ENCODE measurements at regions of chr5 and their contacts with region 1.

Region 1: DNA sequence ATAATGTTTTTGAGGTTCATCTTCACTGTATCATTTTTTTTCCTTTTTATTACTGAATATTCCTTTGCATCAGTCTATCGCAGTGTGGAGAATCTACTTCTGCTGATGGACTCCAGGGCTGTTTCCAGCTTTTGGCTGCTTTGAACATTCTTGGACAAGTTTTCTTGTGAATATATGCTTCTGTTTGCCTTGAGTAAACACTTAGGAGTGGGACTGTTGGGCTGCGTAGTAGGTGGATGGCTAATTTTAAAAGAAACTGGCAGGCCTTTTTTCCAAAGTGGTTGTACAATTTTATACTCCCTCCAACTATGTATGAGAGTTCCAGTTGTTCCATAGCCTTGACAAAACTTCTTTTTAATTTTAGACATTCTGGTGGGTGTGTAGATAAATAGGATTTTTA is 102.4 kb downstream of the WDR41 start:
- DNase-seq: no peak
- ATAC-seq: no peak
- H3K4me3 ChIP-seq: no peak overlapping the region
- H3K4me3 Mint-ChIP-seq: no peak overlapping the region
- H3K27ac ChIP-seq: no peak overlapping the region
- H3K27ac Mint-ChIP-seq: no peak overlapping the region
- H3K4me1 ChIP-seq: no peaks in the 10 kb centered on the region
- H3K4me1 Mint-ChIP-seq: no peaks in the 10 kb centered on the region
- H3K27me3 ChIP-seq: peaks cover 0 to 3% of the 10 kb centered on the region in 2 experiments
- H3K27me3 Mint-ChIP-seq: no peaks in the 10 kb centered on the region
- CTCF ChIP-seq: no peak

Region 2: DNA sequence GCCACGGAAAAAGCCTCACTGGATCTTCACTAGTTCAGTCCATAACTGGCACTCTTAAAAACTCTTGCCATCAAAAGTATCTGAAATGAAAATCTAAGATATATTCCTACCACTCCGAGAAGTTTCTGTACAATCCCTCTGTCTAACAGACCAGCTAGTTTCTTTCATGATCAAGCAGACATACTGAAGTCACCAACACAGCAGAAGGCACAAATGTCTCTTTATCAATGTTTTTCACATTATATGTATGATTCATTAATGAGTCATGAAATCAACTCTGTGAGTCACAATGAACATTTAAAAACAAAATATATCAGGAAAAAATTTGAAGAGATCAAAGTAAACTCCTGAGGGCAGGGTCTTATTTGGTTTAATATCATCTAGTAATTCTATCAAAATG is 623.0 kb before region 1 on chr5:
- CTCF ChIA-PET with region 1: no interaction called
- POLR2A ChIA-PET with region 1: no interaction called
- intact Hi-C with region 1: no loop called
- DNase-seq: no peak
- ATAC-seq: no peak
- H3K4me3 ChIP-seq: no peak overlapping the region
- H3K4me3 Mint-ChIP-seq: no peak overlapping the region
- H3K27ac ChIP-seq: no peak overlapping the region
- H3K27ac Mint-ChIP-seq: no peak overlapping the region
- H3K4me1 ChIP-seq: no peaks in the 10 kb centered on the region
- H3K4me1 Mint-ChIP-seq: no peaks in the 10 kb centered on the region
- H3K27me3 ChIP-seq: no peaks in the 10 kb centered on the region
- H3K27me3 Mint-ChIP-seq: no peaks in the 10 kb centered on the region
- CTCF ChIP-seq: no peak

Region 3: DNA sequence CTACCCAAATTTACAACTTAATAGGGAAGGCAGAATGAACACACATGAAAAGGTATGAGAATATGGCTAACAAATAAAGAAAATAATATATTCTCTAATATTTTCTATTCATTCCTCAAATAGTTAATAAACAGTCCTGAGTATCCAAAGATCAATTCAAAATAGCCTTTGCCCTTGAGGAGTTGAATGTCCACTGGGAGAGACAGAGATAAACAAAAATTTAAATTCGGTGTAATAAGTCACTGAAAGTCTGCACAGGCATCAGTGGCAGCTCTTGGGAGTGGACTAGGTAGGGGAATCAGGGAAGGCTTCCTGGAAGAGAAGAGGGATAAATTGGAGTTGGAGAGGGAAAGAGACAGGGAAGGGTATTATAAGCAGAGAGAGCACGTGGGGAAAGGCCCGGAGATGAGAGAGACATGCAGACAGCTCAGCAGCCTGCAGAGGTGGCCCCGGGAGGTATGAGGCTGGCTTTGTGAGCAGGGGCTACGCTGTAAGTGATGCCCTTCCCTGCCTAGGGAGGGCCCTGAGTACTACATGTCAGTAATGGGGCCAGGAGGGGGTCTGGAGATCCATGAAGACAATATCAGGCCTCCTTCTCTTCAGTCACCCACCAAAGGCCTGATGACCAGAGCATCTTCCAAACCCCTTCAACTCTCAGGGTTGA is 42.2 kb before region 1 on chr5:
- CTCF ChIA-PET with region 1: no interaction called
- POLR2A ChIA-PET with region 1: no interaction called
- intact Hi-C with region 1: loop called in 1 of 2 experiments (anchors 5 kb)
- DNase-seq: no peak
- ATAC-seq: no peak
- H3K4me3 ChIP-seq: no peak overlapping the region
- H3K4me3 Mint-ChIP-seq: no peak overlapping the region
- H3K27ac ChIP-seq: no peak overlapping the region
- H3K27ac Mint-ChIP-seq: no peak overlapping the region
- H3K4me1 ChIP-seq: no peaks in the 10 kb centered on the region
- H3K4me1 Mint-ChIP-seq: no peaks in the 10 kb centered on the region
- H3K27me3 ChIP-seq: no peaks in the 10 kb centered on the region
- H3K27me3 Mint-ChIP-seq: no peaks in the 10 kb centered on the region
- CTCF ChIP-seq: no peak

Region 4: GRCh38 chr5:78597068-78597973 is 1207.6 kb after region 1 on chr5:
- CTCF ChIA-PET with region 1: no interaction called
- POLR2A ChIA-PET with region 1: no interaction called
- intact Hi-C with region 1: no loop called
- DNase-seq: no peak
- ATAC-seq: no peak
- H3K4me3 ChIP-seq: no peak overlapping the region
- H3K4me3 Mint-ChIP-seq: no peak overlapping the region
- H3K27ac ChIP-seq: no peak overlapping the region
- H3K27ac Mint-ChIP-seq: no peak overlapping the region
- H3K4me1 ChIP-seq: no peaks in the 10 kb centered on the region
- H3K4me1 Mint-ChIP-seq: no peaks in the 10 kb centered on the region
- H3K27me3 ChIP-seq: peaks cover 0 to 3% of the 10 kb centered on the region in 2 experiments
- H3K27me3 Mint-ChIP-seq: peaks cover 24% of the 10 kb centered on the region
- CTCF ChIP-seq: no peak